ENCODE measurements at regions of chr4 and their contacts with region 1.

Region 1: DNA sequence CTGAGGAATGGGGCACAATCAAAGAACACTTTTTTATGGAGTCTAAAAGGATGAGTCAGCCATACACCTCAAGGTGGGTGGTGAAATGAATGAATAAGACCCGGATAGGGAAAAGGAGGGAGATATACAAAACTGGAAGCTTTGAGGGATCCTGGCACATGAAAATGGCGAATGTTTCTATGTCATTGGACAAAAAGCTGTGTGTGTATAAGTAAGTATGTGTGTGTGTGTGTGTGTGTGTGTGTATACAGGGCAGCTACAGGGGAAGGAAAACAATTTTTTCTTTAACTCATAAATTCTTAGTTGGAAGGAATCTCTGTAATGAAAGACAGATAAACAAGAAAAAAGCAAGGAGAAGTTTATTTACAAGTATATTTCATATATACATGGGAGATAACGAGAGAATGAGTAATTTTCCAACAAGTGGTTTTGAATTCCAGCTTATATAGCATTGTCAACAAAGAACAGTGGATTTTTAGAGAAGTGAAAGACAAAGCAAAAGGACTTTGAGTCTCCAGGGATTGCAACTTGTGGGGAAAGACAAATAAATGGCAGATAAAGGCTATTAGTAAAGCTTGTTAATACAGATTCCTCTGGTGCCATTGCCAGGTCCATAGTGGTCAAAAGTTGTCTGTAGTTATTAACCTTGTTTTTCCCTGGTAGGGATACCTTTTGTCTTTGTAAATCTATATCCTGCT is 99.7 kb downstream of the MMRN1 start:
- DNase-seq: peak in 1 of 2 experiments; percentile 67
- H3K4me3 ChIP-seq: no peak overlapping the region
- H3K4me3 Mint-ChIP-seq: peak overlapping the region; percentile 10
- H3K27ac Mint-ChIP-seq: peak overlapping the region; percentile 74
- H3K4me1 ChIP-seq: peaks cover 64% of the 10 kb centered on the region
- H3K4me1 Mint-ChIP-seq: peaks cover 49% of the 10 kb centered on the region
- H3K27me3 ChIP-seq: no peaks in the 10 kb centered on the region
- H3K27me3 Mint-ChIP-seq: no peaks in the 10 kb centered on the region
- CTCF ChIP-seq: no peak

Region 2: DNA sequence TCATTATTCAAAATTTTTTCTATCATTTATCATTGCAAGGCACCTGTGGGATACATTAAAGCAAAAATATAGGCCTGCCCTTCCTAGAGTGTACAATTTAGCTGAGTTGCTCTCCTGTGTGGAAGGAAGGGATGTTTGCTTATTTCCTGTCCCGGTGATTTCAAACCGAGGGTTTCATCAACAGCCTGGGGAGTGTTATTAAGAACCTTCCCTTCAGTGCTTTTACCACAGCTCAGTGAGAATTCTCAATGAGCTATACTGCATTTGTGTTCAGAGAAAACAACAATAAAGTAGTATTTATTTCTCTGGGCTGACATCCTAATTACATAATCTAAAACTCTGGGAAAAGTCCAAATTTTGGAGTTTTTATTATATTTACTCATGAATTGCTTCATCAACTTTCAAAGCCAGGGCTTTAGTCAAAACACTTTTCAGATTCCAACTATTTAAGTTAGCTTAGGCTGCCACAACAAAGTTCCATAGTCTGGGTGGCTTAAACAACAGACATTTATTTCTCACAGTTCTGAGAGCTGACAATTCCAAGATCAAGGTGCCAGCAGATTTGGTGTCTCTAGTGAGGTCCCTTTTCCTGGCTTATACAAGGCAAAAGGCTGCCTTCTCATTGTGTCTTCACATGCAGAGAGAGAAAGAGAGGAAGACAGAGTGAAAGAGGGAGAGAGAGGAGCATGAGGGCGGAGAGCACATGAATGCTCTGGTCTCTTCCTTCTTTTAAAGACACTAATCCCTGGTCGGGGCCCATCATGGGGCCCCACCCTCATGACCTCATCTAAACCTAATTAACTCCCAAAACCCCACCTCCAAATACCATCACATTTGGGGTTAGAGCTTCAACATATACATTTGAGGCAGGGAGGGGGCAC is 37.0 kb before region 1 on chr4:
- CTCF ChIA-PET with region 1: no interaction called
- POLR2A ChIA-PET with region 1: no interaction called
- intact Hi-C with region 1: loop called (anchors 1 kb)
- DNase-seq: peak in 1 of 2 experiments; percentile 2
- H3K4me3 ChIP-seq: no peak overlapping the region
- H3K4me3 Mint-ChIP-seq: no peak overlapping the region
- H3K27ac Mint-ChIP-seq: peak overlapping the region; percentile 58
- H3K4me1 ChIP-seq: no peaks in the 10 kb centered on the region; the same call in 1 of the 2 replicates
- H3K4me1 Mint-ChIP-seq: no peaks in the 10 kb centered on the region
- H3K27me3 ChIP-seq: no peaks in the 10 kb centered on the region
- H3K27me3 Mint-ChIP-seq: no peaks in the 10 kb centered on the region
- CTCF ChIP-seq: no peak

Region 3: GRCh38 chr4:90025248-90025647 is 30.9 kb after region 1 on chr4:
- CTCF ChIA-PET with region 1: no interaction called
- POLR2A ChIA-PET with region 1: no interaction called
- intact Hi-C with region 1: no loop called
- DNase-seq: no peak
- H3K4me3 ChIP-seq: no peak overlapping the region
- H3K4me3 Mint-ChIP-seq: no peak overlapping the region
- H3K27ac Mint-ChIP-seq: no peak overlapping the region
- H3K4me1 ChIP-seq: no peaks in the 10 kb centered on the region
- H3K4me1 Mint-ChIP-seq: no peaks in the 10 kb centered on the region
- H3K27me3 ChIP-seq: no peaks in the 10 kb centered on the region
- H3K27me3 Mint-ChIP-seq: no peaks in the 10 kb centered on the region
- CTCF ChIP-seq: peak; percentile 6 to 32

Measured in Caco-2 (cell line).